ENCODE measurements at regions of chr2 and their contacts with region 1.

Region 1: GRCh38 chr2:224469374-224469964 is 67.6 kb upstream of the FAM124B start:
- DNase-seq: no peak
- ATAC-seq: no peak
- H3K4me3 ChIP-seq: no peak overlapping the region
- H3K4me3 Mint-ChIP-seq: no peak overlapping the region
- H3K27ac ChIP-seq: no peak overlapping the region
- H3K27ac Mint-ChIP-seq: no peak overlapping the region
- H3K4me1 ChIP-seq: no peaks in the 10 kb centered on the region
- H3K4me1 Mint-ChIP-seq: peaks cover 0 to under 1% (median 0%) of the 10 kb centered on the region in 3 donors
- H3K27me3 ChIP-seq: no peaks in the 10 kb centered on the region
- H3K27me3 Mint-ChIP-seq: no peaks in the 10 kb centered on the region

Region 2: GRCh38 chr2:222842491-222843174 is 1626.8 kb before region 1 on chr2:
- CTCF ChIA-PET with region 1: no interaction called
- POLR2A ChIA-PET with region 1: no interaction called
- DNase-seq: no peak
- ATAC-seq: no peak
- H3K4me3 ChIP-seq: no peak overlapping the region
- H3K4me3 Mint-ChIP-seq: no peak overlapping the region
- H3K27ac ChIP-seq: no peak overlapping the region
- H3K27ac Mint-ChIP-seq: no peak overlapping the region
- H3K4me1 ChIP-seq: peaks cover 0 to 2% of the 10 kb centered on the region in 2 experiments
- H3K4me1 Mint-ChIP-seq: peaks cover 8 to 19% (median 9%) of the 10 kb centered on the region in 3 donors
- H3K27me3 ChIP-seq: peaks cover 0 to 4% of the 10 kb centered on the region in 2 experiments
- H3K27me3 Mint-ChIP-seq: peaks cover 4 to 18% of the 10 kb centered on the region in 2 donors

Region 3: GRCh38 chr2:224046752-224047151 is 422.7 kb before region 1 on chr2:
- CTCF ChIA-PET with region 1: no interaction called
- POLR2A ChIA-PET with region 1: no interaction called
- DNase-seq: no peak
- ATAC-seq: no peak
- H3K4me3 ChIP-seq: no peak overlapping the region
- H3K4me3 Mint-ChIP-seq: no peak overlapping the region
- H3K27ac ChIP-seq: no peak overlapping the region
- H3K27ac Mint-ChIP-seq: no peak overlapping the region
- H3K4me1 ChIP-seq: no peaks in the 10 kb centered on the region
- H3K4me1 Mint-ChIP-seq: peaks cover 0 to 3% (median 0%) of the 10 kb centered on the region in 3 donors
- H3K27me3 ChIP-seq: peaks cover 0 to 9% of the 10 kb centered on the region in 2 experiments
- H3K27me3 Mint-ChIP-seq: peaks cover 19 to 46% of the 10 kb centered on the region in 2 donors

Region 4: DNA sequence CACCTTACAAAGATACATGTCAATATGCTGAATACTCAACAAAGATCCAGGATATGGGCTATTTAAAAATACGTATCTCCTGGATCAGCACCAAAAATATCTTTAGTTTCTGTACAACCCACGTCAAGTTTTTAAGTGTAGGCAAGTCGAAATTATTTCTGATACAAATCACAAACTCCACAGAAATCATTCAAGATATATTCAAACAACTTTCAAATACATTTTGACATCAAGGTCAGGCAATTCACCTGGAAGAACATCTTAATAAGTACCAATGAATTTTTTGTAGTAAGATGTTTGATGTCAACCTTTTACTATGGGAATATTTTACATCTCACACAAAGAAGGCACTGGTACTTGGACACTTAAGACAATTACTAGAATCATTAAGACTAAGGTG is 29.5 kb after region 1 on chr2:
- CTCF ChIA-PET with region 1: no interaction called
- POLR2A ChIA-PET with region 1: no interaction called
- DNase-seq: no peak
- ATAC-seq: no peak
- H3K4me3 ChIP-seq: no peak overlapping the region
- H3K4me3 Mint-ChIP-seq: no peak overlapping the region
- H3K27ac ChIP-seq: no peak overlapping the region
- H3K27ac Mint-ChIP-seq: no peak overlapping the region
- H3K4me1 ChIP-seq: no peaks in the 10 kb centered on the region
- H3K4me1 Mint-ChIP-seq: peaks cover 10 to 18% (median 14%) of the 10 kb centered on the region in 3 donors
- H3K27me3 ChIP-seq: no peaks in the 10 kb centered on the region
- H3K27me3 Mint-ChIP-seq: no peaks in the 10 kb centered on the region

Region 5: GRCh38 chr2:224753743-224754540 is 284.5 kb after region 1 on chr2:
- CTCF ChIA-PET with region 1: no interaction called
- POLR2A ChIA-PET with region 1: interaction called in 1 of 2 experiments, 14 read pairs
- DNase-seq: no peak
- ATAC-seq: no peak
- H3K4me3 ChIP-seq: no peak overlapping the region
- H3K4me3 Mint-ChIP-seq: no peak overlapping the region
- H3K27ac ChIP-seq: no peak overlapping the region
- H3K27ac Mint-ChIP-seq: no peak overlapping the region
- H3K4me1 ChIP-seq: no peaks in the 10 kb centered on the region
- H3K4me1 Mint-ChIP-seq: no peaks in the 10 kb centered on the region
- H3K27me3 ChIP-seq: no peaks in the 10 kb centered on the region
- H3K27me3 Mint-ChIP-seq: peaks cover 0 to 3% of the 10 kb centered on the region in 2 donors

Measured in T-cell (primary cell).